ENCODE measurements at regions of chr10 and their contacts with region 1.

Region 1: GRCh38 chr10:62038609-62039190 is 137.2 kb downstream of the ARID5B start:
- DNase-seq: peak in 1 of 2 experiments; percentile 63
- H3K4me3 ChIP-seq: no peak overlapping the region
- H3K27ac ChIP-seq: no peak overlapping the region
- H3K4me1 ChIP-seq: peaks cover 0 to 10% (median 9%) of the 10 kb centered on the region in 4 experiments; a peak in 5 of 7 replicates
- H3K27me3 ChIP-seq: no peaks in the 10 kb centered on the region; a peak in 1 of 7 replicates
- CTCF ChIP-seq: peak; percentile 58 to 72 (median 64)
- EP300 ChIP-seq: no peak
- POLR2A ChIP-seq: no peak
- RAD21 ChIP-seq: peak; percentile 90 to 92

Region 2: DNA sequence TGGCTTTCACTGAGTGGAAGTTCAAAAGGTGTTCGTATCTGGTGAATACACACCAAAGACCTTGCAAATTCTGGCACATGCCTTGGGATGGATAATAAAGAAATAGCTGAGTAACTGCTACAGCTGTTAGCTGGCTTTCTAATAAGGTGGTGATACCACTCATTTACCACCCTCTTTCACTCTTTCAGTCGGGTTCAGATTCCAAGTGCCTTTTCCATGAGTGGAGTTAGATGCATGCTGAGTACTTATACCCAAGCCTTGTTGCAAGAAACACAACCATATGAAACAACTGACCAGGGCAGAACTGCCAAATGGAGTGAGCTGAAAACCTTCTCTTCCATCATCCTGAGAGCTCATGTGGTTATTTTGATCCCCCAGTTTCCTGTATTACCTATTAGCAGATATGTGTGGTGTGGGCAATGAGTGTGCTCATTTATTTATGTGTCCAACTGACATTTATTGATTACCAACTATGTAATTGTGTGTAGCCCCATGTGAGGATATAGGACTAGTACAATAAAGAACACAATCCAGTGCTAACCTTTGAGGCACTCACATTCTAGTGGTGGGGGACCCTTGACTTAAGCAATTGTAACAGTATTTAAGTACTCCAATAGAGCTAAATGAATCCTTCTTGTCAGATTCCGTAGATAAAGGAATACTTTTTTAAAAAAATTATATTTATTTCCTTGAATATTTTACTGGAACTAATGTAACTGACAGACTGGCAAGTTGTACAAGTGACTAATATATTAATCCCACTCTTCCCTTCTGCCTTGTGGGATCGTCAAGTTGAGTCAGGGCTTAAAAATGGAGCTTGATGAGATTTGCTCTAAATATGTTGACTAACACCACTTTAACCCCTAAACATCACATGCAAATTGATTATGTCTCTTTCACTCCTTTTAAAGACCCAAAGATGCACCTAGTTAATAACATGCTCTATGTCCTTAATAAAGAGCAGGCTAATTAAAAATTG is 12.5 kb before region 1 on chr10:
- CTCF ChIA-PET with region 1: interaction called, 22 read pairs
- POLR2A ChIA-PET with region 1: no interaction called
- DNase-seq: no peak
- H3K4me3 ChIP-seq: no peak overlapping the region
- H3K27ac ChIP-seq: no peak overlapping the region
- H3K4me1 ChIP-seq: no peaks in the 10 kb centered on the region
- H3K27me3 ChIP-seq: no peaks in the 10 kb centered on the region
- CTCF ChIP-seq: no peak
- EP300 ChIP-seq: no peak
- POLR2A ChIP-seq: no peak
- RAD21 ChIP-seq: no peak

Region 3: GRCh38 chr10:62050893-62051433 is 12.3 kb after region 1 on chr10:
- CTCF ChIA-PET with region 1: interaction called, 55 read pairs
- POLR2A ChIA-PET with region 1: interaction called, 4 read pairs
- DNase-seq: no peak
- H3K4me3 ChIP-seq: no peak overlapping the region
- H3K27ac ChIP-seq: no peak overlapping the region
- H3K4me1 ChIP-seq: peaks cover 3 to 7% (median 6%) of the 10 kb centered on the region in 4 experiments; a peak in 6 of 7 replicates
- H3K27me3 ChIP-seq: peaks cover 0 to 2% (median 0%) of the 10 kb centered on the region in 4 experiments; a peak in 2 of 7 replicates
- CTCF ChIP-seq: no peak
- EP300 ChIP-seq: no peak
- POLR2A ChIP-seq: no peak
- RAD21 ChIP-seq: no peak

Region 4: GRCh38 chr10:62071846-62072281 is 33.2 kb after region 1 on chr10:
- CTCF ChIA-PET with region 1: interaction called, 10 read pairs
- POLR2A ChIA-PET with region 1: no interaction called
- DNase-seq: no peak
- H3K4me3 ChIP-seq: no peak overlapping the region
- H3K27ac ChIP-seq: no peak overlapping the region
- H3K4me1 ChIP-seq: 0 out of 7 replicates have a peak, but pooled peaks cover 0 to 3% (median 0%) of the 10 kb centered on the region in 4 experiments
- H3K27me3 ChIP-seq: no peaks in the 10 kb centered on the region
- CTCF ChIP-seq: no peak
- EP300 ChIP-seq: no peak
- POLR2A ChIP-seq: no peak
- RAD21 ChIP-seq: no peak

Region 5: GRCh38 chr10:62244780-62245467 is 206.2 kb after region 1 on chr10:
- CTCF ChIA-PET with region 1: interaction called, 22 read pairs
- POLR2A ChIA-PET with region 1: no interaction called
- DNase-seq: no peak
- H3K4me3 ChIP-seq: no peak overlapping the region
- H3K27ac ChIP-seq: no peak overlapping the region
- H3K4me1 ChIP-seq: 0 out of 7 replicates have a peak, but pooled peaks cover 0 to 2% (median 0%) of the 10 kb centered on the region in 4 experiments
- H3K27me3 ChIP-seq: no peaks in the 10 kb centered on the region
- CTCF ChIP-seq: peak in 2 of 3 experiments; percentile 58 to 73; a peak in 3 of 4 replicates
- EP300 ChIP-seq: no peak
- POLR2A ChIP-seq: no peak
- RAD21 ChIP-seq: peak; percentile 75 to 76

Measured in H1 (cell line).